Activated naive CD4-positive, alpha-beta T cell treated with anti-CD3 and anti-CD28 coated beads, Interleukin-2, amount 10 ng/mL, durations not matched to agents 7 days and 5 days (primary cell): ENCODE measurements at regions of chr22 and their contacts with region 1.

Region 1: GRCh38 chr22:17830043-17830961 is 56.0 kb upstream of the BID start:
- DNase-seq: peak; percentile 88
- H3K4me3 Mint-ChIP-seq: no peak overlapping the region
- H3K27ac Mint-ChIP-seq: no peak overlapping the region
- H3K4me1 Mint-ChIP-seq: peaks cover 8% of the 10 kb centered on the region
- H3K27me3 Mint-ChIP-seq: no peaks in the 10 kb centered on the region

Region 2: DNA sequence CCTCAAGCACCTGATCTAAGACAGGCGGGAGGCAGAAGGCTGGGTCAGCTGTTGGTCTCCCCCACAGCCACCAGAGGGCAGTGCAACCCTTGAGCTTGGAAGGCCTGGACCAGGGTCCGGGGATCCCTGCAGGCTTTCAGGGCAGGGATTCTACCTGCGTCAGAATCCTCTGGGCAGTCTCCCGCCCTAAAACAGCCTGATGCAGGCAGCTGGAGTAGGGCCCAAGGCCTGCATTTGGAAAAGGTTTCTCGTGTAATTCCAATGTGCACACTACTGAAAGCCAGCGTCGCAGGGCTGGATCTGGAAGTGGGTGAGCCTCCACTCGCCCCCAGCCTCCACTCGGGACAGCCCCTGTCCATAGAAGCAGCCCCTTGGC is 87.8 kb before region 1 on chr22:
- CTCF ChIA-PET with region 1: interaction called, 10 read pairs
- DNase-seq: peak; percentile 75
- H3K4me3 Mint-ChIP-seq: no peak overlapping the region
- H3K27ac Mint-ChIP-seq: no peak overlapping the region
- H3K4me1 Mint-ChIP-seq: peaks cover 12% of the 10 kb centered on the region
- H3K27me3 Mint-ChIP-seq: no peaks in the 10 kb centered on the region

Region 3: GRCh38 chr22:17910561-17911311 is 80.4 kb after region 1 on chr22:
- CTCF ChIA-PET with region 1: no interaction called
- DNase-seq: no peak
- H3K4me3 Mint-ChIP-seq: no peak overlapping the region
- H3K27ac Mint-ChIP-seq: no peak overlapping the region
- H3K4me1 Mint-ChIP-seq: no peaks in the 10 kb centered on the region
- H3K27me3 Mint-ChIP-seq: peaks cover 5% of the 10 kb centered on the region

Region 4: GRCh38 chr22:18024276-18024947 is 194.1 kb after region 1 on chr22 and contains the start of gene MICAL3:
- CTCF ChIA-PET with region 1: interaction called, 42 read pairs
- DNase-seq: peak; percentile 66
- H3K4me3 Mint-ChIP-seq: peak within 1 kb of the TSS; percentile 77
- H3K27ac Mint-ChIP-seq: no peak within 1 kb of the TSS
- H3K4me1 Mint-ChIP-seq: peaks cover 16% of the 10 kb centered on the region
- H3K27me3 Mint-ChIP-seq: peaks cover 66% of the 10 kb centered on the region

Region 5: DNA sequence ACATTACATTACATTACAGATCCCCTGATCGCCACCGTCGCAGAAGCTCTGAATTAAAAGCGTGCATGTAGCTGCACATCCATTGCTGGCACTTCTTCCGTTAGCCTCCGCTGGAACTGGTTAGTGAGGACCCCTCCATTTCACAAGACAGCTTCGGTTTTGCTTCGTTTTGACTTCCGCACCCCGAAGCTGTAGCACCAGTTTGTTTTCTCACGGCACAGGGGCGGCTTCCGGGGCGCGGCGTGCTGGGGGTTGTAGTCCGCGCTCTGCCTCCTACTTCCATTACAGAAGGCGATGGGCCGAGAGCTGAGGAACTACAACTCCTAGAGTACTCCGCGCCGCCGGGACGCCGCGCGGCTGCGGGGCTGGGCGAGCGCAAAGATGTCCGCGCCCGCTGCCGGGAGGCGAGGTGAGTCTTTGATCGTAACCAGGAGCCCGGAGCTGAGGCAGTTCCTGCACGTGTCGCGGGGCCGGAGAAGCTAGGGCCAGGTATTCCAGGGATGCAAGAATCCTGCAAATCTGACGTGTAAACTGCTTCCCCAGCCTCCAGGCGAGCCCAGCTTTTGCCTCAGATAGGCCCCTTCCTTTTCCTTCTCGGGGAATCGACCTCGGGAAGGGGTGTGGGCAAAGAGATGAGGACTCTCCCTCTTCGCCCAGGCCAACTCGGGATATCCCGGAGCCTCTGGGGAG is 247.5 kb after region 1 on chr22 and contains the start of gene PEX26:
- CTCF ChIA-PET with region 1: interaction called, 120 read pairs
- DNase-seq: peak; percentile 98
- H3K4me3 Mint-ChIP-seq: peak within 1 kb of the TSS; percentile 84
- H3K27ac Mint-ChIP-seq: peak within 1 kb of the TSS; percentile 92
- H3K4me1 Mint-ChIP-seq: peaks cover 55% of the 10 kb centered on the region
- H3K27me3 Mint-ChIP-seq: no peaks in the 10 kb centered on the region